Endothelial cell of umbilical vein (primary cell): ENCODE measurements at regions of chr1 and their contacts with region 1.

Region 1: DNA sequence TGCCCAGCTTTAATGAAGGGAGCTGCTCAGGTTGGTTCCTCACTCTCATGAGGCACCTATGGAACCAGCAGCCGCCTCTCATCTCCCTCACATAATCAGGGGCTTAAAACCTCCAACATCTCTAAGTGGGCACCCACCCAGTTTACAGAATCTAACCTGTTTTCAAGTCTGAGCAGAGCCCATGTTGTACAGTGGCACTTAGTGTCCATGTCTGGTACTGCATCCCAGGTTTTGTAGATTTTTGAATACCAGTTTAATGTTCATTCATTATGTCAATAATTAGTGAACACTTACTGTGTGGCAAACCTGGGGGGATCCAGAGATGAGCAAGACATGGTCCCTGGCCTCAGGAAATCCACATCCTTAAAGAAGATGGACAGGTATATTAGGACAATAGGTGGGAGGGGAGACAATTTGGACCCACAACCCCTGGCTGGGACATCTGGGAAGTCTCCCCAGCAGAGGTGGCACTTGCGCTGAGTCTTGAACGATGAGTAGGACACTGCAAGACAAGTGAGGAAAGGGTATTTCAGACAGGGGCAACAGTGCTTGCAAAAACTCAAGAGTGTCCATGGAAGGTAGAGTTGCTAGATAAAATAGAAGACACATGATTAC is 83.3 kb downstream of the LACTBL1 start:
- DNase-seq: peak; percentile 81
- H3K4me3 ChIP-seq: no peak overlapping the region
- H3K27ac ChIP-seq: peak overlapping the region; percentile 79
- H3K4me1 ChIP-seq: peaks cover 18% of the 10 kb centered on the region
- H3K27me3 ChIP-seq: no peaks in the 10 kb centered on the region
- CTCF ChIP-seq: peak; percentile 71 to 90
- POLR2A ChIP-seq: peak; percentile 5

Region 2: DNA sequence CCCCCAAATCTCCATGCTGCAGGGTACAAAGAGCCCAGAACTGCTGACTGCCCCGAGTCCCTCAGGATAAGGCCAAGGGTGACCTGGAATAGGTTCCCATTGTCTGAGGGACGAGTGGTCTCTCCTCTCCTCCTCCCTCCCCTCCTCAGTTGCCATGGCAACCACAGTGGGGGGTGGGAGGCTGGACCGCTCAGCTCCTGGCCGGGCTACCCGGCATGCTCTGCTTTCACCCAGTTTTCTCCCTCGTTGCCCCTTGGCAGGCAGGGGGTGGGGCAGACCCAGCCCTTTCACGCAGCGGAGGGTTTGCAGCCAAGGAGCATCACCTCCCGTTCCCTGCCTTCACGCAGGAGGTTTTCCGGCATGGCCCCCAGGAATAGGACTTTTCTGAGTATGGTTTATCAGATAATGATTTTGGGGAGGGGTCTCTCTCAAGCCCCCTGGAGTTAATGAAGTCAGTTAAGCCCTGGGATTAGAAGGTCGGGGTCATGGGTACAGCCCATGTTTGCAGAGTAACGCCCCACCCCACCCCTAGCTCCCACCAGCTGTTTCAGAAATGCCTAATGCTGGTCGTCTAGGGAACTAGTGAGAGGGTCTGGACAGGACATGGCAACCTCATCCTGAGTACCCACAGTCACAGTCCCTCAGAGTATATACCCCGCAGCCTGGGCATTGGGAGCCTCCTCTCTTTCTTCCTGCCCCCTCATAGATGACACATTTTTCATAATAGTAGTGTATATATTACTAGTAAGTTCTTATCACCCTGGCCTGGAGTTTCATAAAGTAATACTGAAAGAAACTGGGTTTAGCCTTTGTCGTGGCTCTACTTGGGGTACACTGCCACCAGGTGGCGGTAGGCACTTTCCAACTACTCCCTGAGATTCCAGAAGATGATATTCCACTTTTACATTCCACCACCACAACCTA is 215.6 kb before region 1 on chr1:
- CTCF ChIA-PET with region 1: interaction called, 71 read pairs
- POLR2A ChIA-PET with region 1: no interaction called
- dilution Hi-C with region 1: no loop called
- intact Hi-C with region 1: loop called (anchors 1 kb)
- DNase-seq: peak; percentile 74
- H3K4me3 ChIP-seq: no peak overlapping the region
- H3K27ac ChIP-seq: no peak overlapping the region
- H3K4me1 ChIP-seq: peaks cover 10% of the 10 kb centered on the region
- H3K27me3 ChIP-seq: peaks cover 11 to 12% of the 10 kb centered on the region in 2 experiments
- CTCF ChIP-seq: peak; percentile 67 to 86
- POLR2A ChIP-seq: no peak

Region 3: DNA sequence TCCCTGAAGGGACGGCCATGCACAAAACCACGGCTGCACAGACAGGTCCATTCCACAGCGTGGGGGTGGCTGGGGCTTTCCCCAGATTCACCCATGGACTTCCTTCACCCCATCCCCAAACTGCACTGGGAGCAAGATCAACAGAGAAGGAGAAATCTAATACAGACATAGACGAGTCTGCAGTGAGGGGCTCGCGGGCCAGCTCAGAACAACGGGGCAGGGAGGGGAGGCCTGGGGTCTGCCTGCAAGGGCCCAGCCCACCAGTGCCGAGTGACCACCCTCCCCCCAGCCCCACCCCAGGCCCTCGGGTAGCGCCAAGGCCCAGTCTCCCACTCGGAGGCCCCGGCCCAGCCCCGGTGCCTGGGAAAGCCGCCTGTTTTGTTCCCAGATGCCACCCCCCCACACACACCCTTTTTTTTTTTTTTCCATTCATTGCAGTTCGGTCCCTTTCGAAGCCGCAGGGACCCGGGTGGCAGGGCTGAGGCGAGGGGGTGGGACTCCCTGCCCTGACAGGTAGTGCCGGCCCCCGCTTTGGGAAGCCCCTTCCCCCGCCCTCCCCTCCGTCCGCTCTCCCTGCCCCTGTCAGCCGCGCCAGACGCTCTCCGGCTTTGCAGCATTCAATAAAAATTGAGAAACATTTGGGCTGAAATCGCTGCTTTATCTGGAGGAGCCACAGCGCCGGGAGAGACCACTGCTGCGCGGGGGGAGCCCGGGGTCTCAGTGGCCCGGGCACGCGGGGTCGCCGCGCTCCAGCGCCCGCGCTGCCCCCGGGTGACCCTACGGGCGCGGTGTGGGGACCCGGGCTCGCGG is 179.2 kb before region 1 on chr1:
- CTCF ChIA-PET with region 1: interaction called, 57 read pairs
- POLR2A ChIA-PET with region 1: no interaction called
- dilution Hi-C with region 1: no loop called
- intact Hi-C with region 1: no loop called
- DNase-seq: peak; percentile 49
- H3K4me3 ChIP-seq: peak overlapping the region; percentile 29 to 50 (median 33)
- H3K27ac ChIP-seq: peak overlapping the region; percentile 61
- H3K4me1 ChIP-seq: peaks cover 20% of the 10 kb centered on the region
- H3K27me3 ChIP-seq: no peaks in the 10 kb centered on the region
- CTCF ChIP-seq: no peak
- POLR2A ChIP-seq: no peak

Region 4: DNA sequence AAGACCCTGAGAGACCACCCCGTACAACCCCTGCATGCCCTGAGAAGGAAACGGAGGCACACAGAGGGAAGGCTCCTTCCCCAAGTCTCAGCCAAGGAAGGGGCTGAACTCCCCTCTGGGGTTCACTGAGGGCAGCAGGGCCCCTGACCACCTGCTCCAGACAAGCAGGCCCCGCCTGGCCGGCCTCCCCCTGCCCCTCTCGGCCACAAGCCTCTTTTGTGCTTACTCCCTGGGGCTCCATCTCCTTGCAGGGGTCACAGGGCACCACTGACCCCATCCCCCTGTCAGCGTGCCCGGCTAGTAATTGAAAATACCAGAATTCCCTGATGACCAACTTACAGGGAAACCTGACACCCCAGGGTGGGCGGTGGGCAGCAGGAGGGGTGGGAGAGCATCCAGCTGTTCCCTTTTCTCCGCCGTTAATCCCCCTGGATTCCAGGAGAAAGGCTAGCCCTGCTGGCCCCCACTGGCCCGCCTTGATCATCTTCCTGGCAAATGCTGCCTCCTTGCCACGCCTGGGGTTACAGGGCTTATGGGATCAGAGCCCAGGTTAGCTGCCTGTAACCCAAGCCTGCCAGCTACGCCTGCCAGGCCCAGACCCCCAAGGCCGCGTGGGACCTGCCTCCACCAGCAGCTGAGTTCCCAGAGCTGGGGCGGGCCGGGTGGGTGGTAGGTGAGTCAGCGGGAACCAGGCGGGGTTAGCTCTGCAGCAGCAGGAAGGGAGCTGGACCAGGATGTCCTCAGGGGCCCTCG is 12.8 kb before region 1 on chr1:
- CTCF ChIA-PET with region 1: interaction called, 20 read pairs
- POLR2A ChIA-PET with region 1: no interaction called
- dilution Hi-C with region 1: no loop called
- intact Hi-C with region 1: no loop called
- DNase-seq: peak; percentile 77
- H3K4me3 ChIP-seq: no peak overlapping the region
- H3K27ac ChIP-seq: peak overlapping the region; percentile 2
- H3K4me1 ChIP-seq: peaks cover 21% of the 10 kb centered on the region
- H3K27me3 ChIP-seq: no peaks in the 10 kb centered on the region
- CTCF ChIP-seq: no peak
- POLR2A ChIP-seq: no peak

Region 5: DNA sequence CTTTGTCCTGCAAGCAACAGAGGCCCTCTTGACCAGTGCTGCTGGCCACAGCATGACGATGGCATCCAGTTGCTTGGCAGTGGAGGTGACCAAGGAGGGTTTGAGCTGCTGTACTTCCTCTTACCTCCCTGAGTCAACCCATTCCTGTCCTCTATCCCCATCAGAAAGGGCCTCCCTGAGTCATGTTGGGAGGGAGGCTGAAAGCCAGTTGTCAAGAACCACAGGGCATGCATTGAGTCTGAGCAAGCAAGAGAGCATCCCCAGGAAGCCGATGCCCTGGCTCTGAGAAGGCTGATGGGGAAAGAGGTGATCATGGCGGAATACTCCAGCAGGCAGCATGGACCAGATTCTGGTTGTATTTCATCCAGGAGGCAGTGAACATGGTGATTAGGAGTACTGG is 13.8 kb after region 1 on chr1:
- CTCF ChIA-PET with region 1: interaction called, 10 read pairs
- POLR2A ChIA-PET with region 1: no interaction called
- dilution Hi-C with region 1: no loop called
- intact Hi-C with region 1: no loop called
- DNase-seq: no peak
- H3K4me3 ChIP-seq: no peak overlapping the region
- H3K27ac ChIP-seq: no peak overlapping the region
- H3K4me1 ChIP-seq: no peaks in the 10 kb centered on the region
- H3K27me3 ChIP-seq: no peaks in the 10 kb centered on the region
- CTCF ChIP-seq: no peak
- POLR2A ChIP-seq: no peak

Region 6: DNA sequence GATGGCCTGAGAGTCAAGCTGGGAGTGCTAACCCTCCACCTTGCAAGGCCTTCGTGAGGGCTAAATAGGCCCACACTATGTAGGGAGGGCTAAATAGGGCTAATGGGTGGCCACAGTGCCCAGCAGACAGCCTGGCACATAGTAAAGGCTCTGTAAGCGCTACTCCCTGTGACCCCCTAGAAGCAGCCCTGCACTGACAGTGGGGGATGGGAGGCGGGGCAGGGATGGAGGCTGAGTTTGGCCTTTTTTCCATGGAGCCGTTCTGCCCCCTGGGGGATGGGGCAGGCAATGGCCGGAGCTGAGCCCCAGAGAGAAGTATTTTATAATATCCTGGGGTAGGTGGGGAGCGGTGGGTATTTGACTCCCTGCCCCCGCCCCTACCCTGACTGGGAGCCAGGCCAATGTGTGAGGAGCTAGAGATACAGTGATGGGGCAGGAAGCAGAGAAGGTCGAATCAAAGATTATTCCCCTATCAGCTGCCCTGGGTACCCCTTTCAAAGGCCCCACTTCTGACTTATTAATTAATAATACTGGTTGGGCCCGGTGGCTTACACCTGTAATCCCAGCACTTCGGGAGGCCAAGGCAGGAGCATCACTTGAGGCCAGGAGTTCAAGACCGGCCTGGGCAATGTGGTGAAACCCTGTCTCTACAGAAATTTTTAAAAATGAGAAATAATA is 41.1 kb after region 1 on chr1:
- CTCF ChIA-PET with region 1: interaction called, 10 read pairs
- POLR2A ChIA-PET with region 1: no interaction called
- dilution Hi-C with region 1: no loop called
- intact Hi-C with region 1: no loop called
- DNase-seq: peak; percentile 49
- H3K4me3 ChIP-seq: no peak overlapping the region
- H3K27ac ChIP-seq: no peak overlapping the region
- H3K4me1 ChIP-seq: no peaks in the 10 kb centered on the region
- H3K27me3 ChIP-seq: no peaks in the 10 kb centered on the region
- CTCF ChIP-seq: peak; percentile 84 to 88
- POLR2A ChIP-seq: no peak